ENCODE measurements at regions of chr18 and their contacts with region 1.

Region 1: GRCh38 chr18:3062798-3063680 is 50.1 kb upstream of the LPIN2 start:
- DNase-seq: peak; percentile 38 to 79 (median 66)
- ATAC-seq: peak; percentile 48 to 59 (median 54)
- H3K4me3 ChIP-seq: peak overlapping the region in 1 of 2 donors; percentile 10
- H3K4me3 Mint-ChIP-seq: peak overlapping the region; percentile 51 to 81 (median 72)
- H3K27ac ChIP-seq: peak overlapping the region; percentile 100
- H3K27ac Mint-ChIP-seq: peak overlapping the region; percentile 92 to 96
- H3K4me1 ChIP-seq: peaks cover 48 to 64% of the 10 kb centered on the region in 2 experiments
- H3K4me1 Mint-ChIP-seq: peaks cover 70 to 73% (median 73%) of the 10 kb centered on the region in 3 donors
- H3K27me3 ChIP-seq: no peaks in the 10 kb centered on the region
- H3K27me3 Mint-ChIP-seq: no peaks in the 10 kb centered on the region

Region 2: DNA sequence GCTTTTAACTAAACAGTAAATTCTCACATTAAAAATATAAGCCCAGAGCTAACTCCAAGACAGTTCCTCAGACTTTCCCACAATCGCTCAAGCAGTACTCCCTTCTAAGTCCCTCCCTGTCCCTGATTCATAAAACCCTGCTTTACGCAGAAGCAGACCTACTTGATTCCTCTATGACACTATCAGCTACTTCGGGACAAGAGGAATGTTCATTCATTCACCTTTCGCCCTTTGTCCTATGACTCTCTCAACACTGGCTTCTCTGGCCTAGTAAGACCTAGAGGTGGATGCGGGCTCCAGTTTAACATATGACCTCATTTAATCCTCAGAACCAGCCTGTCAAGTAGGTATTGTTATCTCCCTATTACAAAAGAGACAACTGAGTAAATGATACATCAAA is 60.3 kb before region 1 on chr18:
- CTCF ChIA-PET with region 1: interaction called, 6 to 23 read pairs
- POLR2A ChIA-PET with region 1: interaction called, 3 to 8 read pairs
- DNase-seq: no peak
- ATAC-seq: no peak
- H3K4me3 ChIP-seq: no peak overlapping the region
- H3K4me3 Mint-ChIP-seq: no peak overlapping the region
- H3K27ac ChIP-seq: no peak overlapping the region
- H3K27ac Mint-ChIP-seq: peak overlapping the region; percentile 69 to 80
- H3K4me1 ChIP-seq: peaks cover 20 to 21% of the 10 kb centered on the region in 2 experiments
- H3K4me1 Mint-ChIP-seq: peaks cover 56 to 79% (median 77%) of the 10 kb centered on the region in 3 donors
- H3K27me3 ChIP-seq: no peaks in the 10 kb centered on the region
- H3K27me3 Mint-ChIP-seq: no peaks in the 10 kb centered on the region

Region 3: DNA sequence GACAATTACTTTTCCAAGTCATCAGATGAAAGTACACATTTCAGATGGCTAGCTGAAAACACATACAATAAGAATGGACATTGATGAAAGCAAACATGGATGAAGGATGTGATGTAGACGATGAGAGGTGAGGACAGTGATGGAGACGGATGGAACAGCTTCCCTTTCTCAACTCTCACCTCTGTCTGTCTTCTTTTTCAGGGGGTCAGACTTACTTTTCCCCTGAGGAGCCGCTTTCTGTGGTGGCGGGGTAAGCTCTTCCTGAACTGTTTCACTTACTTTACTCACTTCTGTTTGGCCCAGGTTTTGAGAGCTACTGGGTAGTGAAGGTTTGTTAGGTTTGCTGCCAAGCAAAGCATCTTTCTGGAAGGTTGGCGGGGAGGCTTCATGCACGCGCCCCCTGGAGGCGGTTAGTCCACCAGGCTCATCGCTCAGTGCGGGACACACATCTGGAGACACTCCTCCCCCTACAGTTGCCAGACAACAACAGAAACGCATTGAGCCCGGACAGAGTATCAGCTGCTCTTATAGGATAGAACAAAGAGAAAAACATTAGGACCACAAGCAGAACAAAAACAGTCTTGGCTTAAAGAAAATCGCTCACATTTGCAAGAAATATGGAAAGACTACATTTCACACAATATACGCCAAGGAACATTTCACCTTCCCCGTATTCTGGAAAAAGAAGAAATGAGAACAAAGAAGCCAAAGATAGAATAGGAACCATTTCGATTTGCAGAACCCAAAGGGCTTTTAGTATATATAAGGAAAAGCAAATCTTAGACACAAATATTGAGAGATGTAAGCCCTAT is 66.2 kb after region 1 on chr18:
- CTCF ChIA-PET with region 1: interaction called, 4 to 12 read pairs
- POLR2A ChIA-PET with region 1: no interaction called
- DNase-seq: peak; percentile 59 to 88 (median 77)
- ATAC-seq: peak; percentile 95 to 99 (median 98)
- H3K4me3 ChIP-seq: no peak overlapping the region
- H3K4me3 Mint-ChIP-seq: no peak overlapping the region
- H3K27ac ChIP-seq: no peak overlapping the region
- H3K27ac Mint-ChIP-seq: no peak overlapping the region
- H3K4me1 ChIP-seq: peaks cover 0 to 5% of the 10 kb centered on the region in 2 experiments
- H3K4me1 Mint-ChIP-seq: peaks cover 5 to 9% (median 8%) of the 10 kb centered on the region in 3 donors
- H3K27me3 ChIP-seq: no peaks in the 10 kb centered on the region
- H3K27me3 Mint-ChIP-seq: no peaks in the 10 kb centered on the region

Measured in T-cell (primary cell).